ENCODE measurements at regions of chr20 and their contacts with region 1.

Region 1: GRCh38 chr20:9903048-9903655 is 64.3 kb upstream of the PAK5 start:
- DNase-seq: no peak
- CTCF ChIP-seq: peak; percentile 28

Region 2: DNA sequence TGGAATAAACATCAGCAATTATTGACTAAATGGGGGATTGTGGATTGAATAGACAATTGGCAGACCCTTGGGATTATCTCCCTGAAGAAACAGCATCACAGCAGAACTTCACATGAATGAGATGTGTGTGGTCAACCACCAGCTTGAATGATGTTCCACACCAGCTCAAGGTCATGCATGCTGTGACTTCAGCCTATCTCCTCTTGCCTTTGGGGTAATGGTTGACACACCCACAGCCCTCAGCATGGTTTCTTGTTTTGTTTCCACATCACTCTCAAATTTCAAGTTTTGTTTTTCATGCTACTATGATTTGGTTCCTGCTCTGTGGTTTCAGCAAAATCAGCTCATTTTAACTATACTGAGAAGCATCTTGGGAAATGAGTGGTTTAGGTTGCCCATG is 158.6 kb before region 1 on chr20:
- CTCF ChIA-PET with region 1: no interaction called
- POLR2A ChIA-PET with region 1: no interaction called
- DNase-seq: no peak
- CTCF ChIP-seq: no peak

Region 3: GRCh38 chr20:9889270-9889981 is 13.7 kb before region 1 on chr20:
- CTCF ChIA-PET with region 1: interaction called, 13 read pairs
- POLR2A ChIA-PET with region 1: no interaction called
- DNase-seq: peak; percentile 15
- CTCF ChIP-seq: no peak

Region 4: DNA sequence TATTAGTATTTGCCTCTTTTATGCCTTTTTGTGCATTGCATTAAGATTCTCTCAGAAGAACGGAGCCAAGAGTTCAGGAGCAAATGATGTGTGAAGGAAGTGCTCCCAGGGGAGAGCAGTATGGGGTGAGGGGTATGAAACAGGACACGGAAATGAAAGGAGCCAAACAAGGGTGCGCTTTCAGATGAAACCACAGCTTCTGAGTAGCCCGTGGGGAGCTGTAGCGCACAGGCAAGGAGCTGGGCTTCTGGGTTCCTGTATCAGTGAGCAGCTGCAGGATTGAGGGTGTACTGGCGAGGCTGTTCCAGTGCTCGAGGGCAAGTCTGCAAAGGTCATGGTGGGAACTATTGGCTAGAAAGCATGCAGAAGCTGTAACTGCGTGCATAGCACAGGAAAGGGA is 157.1 kb after region 1 on chr20:
- CTCF ChIA-PET with region 1: no interaction called
- POLR2A ChIA-PET with region 1: no interaction called
- DNase-seq: no peak
- CTCF ChIP-seq: no peak